ENCODE measurements at regions of chr12 and their contacts with region 1.

Region 1: DNA sequence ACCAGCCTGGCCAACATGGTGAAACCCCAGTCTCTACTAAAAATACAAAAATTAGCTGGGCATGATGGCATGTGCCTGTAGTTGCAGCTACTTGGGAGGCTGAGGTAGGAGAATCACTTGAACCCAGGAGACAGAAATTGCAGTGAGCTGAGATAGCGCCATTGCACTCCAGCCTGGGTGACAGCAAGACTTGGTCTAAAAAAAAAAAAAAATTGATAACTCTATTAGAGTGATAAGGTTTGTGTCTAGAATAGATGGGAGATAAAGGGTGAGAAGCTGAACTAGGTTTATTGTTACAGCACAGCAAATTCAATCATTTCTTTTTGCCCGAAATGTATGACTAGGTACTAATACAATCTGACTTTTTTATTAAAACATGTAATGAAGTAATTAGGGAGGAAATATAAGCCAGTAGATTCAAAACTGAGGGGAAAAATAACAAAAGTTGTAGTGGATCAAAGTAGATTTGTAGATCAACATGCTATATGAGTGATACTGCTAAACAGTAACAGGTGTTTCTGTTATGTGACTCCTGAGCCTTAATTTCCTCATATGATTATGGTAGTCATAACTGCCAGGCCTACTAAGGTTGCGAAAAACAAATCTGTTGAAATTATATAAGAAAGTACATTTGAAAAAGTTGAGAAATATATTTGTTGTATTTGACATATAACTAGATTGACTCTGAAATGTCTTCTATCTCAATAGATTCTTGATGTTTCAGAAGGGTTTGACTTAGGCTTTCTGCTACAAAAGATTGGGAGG is 83.6 kb downstream of the WNK1 start:
- DNase-seq: peak in 1 of 3 donors; percentile 49
- H3K4me3 ChIP-seq: no peak overlapping the region
- H3K4me3 Mint-ChIP-seq: no peak overlapping the region
- H3K27ac ChIP-seq: peak overlapping the region in 1 of 2 donors; percentile 24
- H3K27ac Mint-ChIP-seq: peak overlapping the region in 1 of 7 donors; percentile 18
- H3K4me1 ChIP-seq: peaks cover 0 to 5% of the 10 kb centered on the region in 2 donors
- H3K4me1 Mint-ChIP-seq: peaks cover 22% of the 10 kb centered on the region
- H3K27me3 ChIP-seq: no peaks in the 10 kb centered on the region
- H3K27me3 Mint-ChIP-seq: no peaks in the 10 kb centered on the region
- CTCF ChIP-seq: no peak

Region 2: DNA sequence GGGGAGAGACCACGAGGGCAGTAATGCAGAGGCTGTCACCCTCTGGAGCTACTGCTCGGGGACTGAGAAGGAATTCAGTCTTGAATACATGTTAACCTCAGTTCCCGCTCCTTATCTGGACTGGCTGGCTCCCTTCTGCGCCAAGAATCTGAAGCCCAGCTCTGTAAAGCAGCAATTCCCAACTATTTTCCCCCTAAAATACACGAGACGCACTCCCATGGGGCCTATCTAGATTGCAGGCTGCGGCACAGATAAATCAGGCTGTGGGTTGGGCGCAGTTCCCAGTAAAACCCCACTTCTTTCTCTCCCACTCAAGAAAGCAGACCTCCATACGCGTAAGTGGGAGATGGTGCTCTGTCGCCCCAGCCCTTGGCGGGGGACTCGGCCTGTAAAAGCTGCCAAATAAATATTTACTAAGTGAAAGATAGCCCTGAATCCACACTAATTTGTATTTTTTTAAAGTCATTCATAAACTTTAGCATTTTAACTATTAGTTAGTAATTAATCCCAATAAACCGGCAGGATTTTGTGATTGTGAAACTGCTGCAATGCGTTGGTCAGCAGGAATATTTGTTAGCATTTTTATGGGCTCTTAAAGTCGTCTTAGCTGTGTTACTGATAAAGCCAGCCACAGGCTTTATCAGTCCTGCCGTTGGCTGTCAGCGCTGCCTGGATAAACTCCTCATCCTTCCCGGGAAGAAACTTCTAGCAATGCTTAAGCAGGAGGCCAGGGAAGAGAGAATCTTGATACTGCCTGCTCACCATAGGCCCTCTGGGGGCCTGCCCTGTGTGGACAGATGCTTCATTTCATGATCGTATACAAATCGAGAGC is 740.7 kb after region 1 on chr12:
- intact Hi-C with region 1: loop called in 1 of 2 experiments (anchors 10 kb)
- DNase-seq: no peak
- H3K4me3 ChIP-seq: no peak overlapping the region
- H3K4me3 Mint-ChIP-seq: peak overlapping the region in 1 of 2 donors; percentile 58
- H3K27ac ChIP-seq: no peak overlapping the region
- H3K27ac Mint-ChIP-seq: peak overlapping the region in 1 of 7 donors; percentile 2
- H3K4me1 ChIP-seq: no peaks in the 10 kb centered on the region
- H3K4me1 Mint-ChIP-seq: peaks cover 19% of the 10 kb centered on the region
- H3K27me3 ChIP-seq: peaks cover 4 to 8% of the 10 kb centered on the region in 2 donors
- H3K27me3 Mint-ChIP-seq: peaks cover 21 to 32% (median 26%) of the 10 kb centered on the region in 3 donors
- CTCF ChIP-seq: no peak